ENCODE measurements at regions of chr1 and their contacts with region 1.

Region 1: GRCh38 chr1:147242439-147243227 is at the start of gene CHD1L:
- DNase-seq: peak; percentile 96
- ATAC-seq: peak; percentile 87
- H3K4me3 ChIP-seq: peak within 1 kb of the TSS; percentile 81 to 95 (median 89)
- H3K4me3 Mint-ChIP-seq: peak within 1 kb of the TSS; percentile 96
- H3K27ac ChIP-seq: peak within 1 kb of the TSS; percentile 46 to 77
- H3K27ac Mint-ChIP-seq: peak within 1 kb of the TSS; percentile 94
- H3K4me1 ChIP-seq: peaks cover 21 to 25% of the 10 kb centered on the region in 2 donors
- H3K4me1 Mint-ChIP-seq: peaks cover 40% of the 10 kb centered on the region
- H3K27me3 ChIP-seq: no peaks in the 10 kb centered on the region
- H3K27me3 Mint-ChIP-seq: no peaks in the 10 kb centered on the region
- CTCF ChIP-seq: peak; percentile 87
- total RNA-seq, gene CHD1L: 54.6 and 55.2 TPM in 2 replicates

Region 2: DNA sequence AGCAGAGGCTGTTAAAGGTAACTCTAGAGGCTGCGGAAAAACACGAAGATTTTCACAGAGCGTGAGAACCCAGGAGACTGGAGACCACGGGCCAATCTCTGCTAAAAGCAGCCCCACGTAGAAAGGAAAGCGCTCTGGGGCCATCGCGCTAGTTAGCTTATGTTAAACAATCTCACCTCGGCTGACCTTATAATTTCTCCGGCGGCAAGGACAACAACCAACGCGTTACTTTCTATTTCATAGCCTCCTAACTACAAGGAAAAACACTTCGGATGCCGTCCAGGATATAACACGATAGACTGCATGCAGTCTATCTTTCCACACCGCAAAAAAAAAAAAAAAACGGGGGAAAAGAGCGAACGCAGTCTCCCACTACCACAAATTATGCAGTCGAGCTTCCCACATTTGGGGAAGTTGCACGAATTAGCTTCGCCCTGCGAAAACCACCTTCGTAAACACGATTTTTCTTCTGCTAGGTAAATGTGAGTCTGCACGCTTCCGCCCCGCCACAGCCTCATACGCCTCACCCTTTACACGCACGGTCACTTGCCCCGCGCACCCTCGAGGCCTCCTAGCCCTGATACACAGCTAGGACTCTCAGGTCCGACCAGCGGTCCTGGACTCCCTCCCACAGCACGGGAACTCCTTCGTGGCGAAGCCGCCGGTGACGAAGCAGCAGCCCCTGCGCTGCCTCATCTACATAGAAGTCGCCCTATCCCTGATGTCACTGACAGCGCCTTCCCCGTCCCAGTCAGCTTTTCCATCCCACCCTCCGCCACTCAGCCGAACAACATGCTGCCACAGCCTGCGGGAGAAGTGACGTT is 158.1 kb before region 1 on chr1:
- CTCF ChIA-PET with region 1: interaction called, 4 read pairs
- POLR2A ChIA-PET with region 1: interaction called, 3 read pairs
- intact Hi-C with region 1: loop called (anchors 2 kb)
- DNase-seq: peak; percentile 92
- ATAC-seq: peak; percentile 76
- H3K4me3 ChIP-seq: peak overlapping the region; percentile 56 to 79 (median 71)
- H3K4me3 Mint-ChIP-seq: peak overlapping the region; percentile 99
- H3K27ac ChIP-seq: peak overlapping the region; percentile 93 to 96
- H3K27ac Mint-ChIP-seq: peak overlapping the region; percentile 100
- H3K4me1 ChIP-seq: peaks cover 33 to 36% of the 10 kb centered on the region in 2 donors
- H3K4me1 Mint-ChIP-seq: peaks cover 33% of the 10 kb centered on the region
- H3K27me3 ChIP-seq: peaks cover 0 to 29% (median 23%) of the 10 kb centered on the region in 4 experiments
- H3K27me3 Mint-ChIP-seq: peaks cover 51% of the 10 kb centered on the region
- CTCF ChIP-seq: no peak

Region 3: DNA sequence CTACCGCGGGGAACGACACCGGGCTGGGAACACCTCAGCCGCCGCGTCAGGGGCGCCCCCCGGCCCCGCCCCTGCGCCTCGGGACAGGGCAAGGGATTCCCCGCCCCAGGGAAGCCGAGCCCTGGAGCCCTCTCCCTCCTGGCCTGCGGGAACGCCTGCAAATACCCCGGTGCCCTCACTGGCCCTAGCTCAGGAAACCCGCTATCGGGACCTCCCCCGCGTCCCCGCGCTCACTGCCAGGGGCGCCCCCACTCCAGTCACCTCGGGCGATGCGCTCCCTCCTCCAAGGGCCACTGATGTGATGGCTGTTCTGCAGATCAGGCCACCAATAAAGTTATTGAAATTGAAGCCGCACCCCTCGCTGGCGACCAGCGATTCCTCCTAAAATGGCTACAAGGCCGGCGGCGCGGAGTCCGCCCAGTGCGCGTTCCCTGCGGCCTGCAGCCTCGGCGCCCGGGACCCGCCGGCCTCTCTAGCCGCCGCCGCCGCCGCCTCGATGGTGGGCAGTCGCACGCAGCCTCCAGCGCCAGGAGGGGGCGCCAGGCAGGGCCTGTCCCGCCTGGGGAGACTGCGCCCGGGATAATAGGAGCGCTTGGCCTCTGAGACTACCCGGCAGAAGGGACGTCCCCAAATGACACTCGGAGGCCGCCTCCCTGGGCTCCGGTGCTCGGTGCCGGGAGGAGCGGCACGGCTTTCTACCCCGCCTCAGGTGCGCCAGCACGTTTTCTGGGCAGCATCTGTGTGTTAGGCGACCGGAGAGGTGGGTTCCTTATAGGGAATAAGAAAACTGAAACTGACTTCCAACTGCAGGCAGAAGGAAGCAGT is 70.3 kb before region 1 on chr1 and contains the start of gene PRKAB2:
- CTCF ChIA-PET with region 1: interaction called, 63 read pairs
- POLR2A ChIA-PET with region 1: interaction called, 10 read pairs
- intact Hi-C with region 1: loop called (anchors 1 kb)
- DNase-seq: peak; percentile 97
- ATAC-seq: peak; percentile 88
- H3K4me3 ChIP-seq: peak within 1 kb of the TSS; percentile 86 to 93 (median 92)
- H3K4me3 Mint-ChIP-seq: peak within 1 kb of the TSS; percentile 95
- H3K27ac ChIP-seq: peak within 1 kb of the TSS; percentile 75 to 86
- H3K27ac Mint-ChIP-seq: peak within 1 kb of the TSS; percentile 94
- H3K4me1 ChIP-seq: peaks cover 21 to 22% of the 10 kb centered on the region in 2 donors
- H3K4me1 Mint-ChIP-seq: peaks cover 35% of the 10 kb centered on the region
- H3K27me3 ChIP-seq: no peaks in the 10 kb centered on the region
- H3K27me3 Mint-ChIP-seq: no peaks in the 10 kb centered on the region
- CTCF ChIP-seq: peak; percentile 88
- total RNA-seq, gene PRKAB2: 17.1 and 18.3 TPM in 2 replicates

Region 4: DNA sequence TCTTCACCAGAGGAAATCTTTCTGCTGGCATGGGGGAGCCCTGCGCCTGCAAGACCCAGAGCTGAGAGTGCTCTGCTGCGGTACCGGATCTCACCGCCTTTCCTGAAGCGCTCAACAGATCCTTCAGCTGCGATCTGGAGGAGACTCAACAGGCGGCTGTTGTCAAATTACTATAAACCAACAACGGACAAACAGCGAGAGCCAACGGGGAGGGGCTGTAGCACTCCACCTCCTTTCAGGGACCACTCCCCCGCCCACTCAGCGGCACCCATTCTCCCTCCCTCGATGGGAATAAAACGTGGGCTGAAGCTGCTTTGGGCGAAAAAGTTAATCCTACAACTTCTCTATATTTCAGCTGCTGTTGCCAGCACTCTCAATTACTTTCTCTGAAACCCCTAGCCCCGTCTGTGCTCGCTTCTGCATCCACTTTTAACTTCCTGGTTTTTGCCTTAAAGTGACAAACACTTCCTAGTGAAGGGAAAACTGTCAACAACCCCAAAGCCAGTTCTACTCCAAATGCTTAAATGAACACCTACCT is 17.4 kb before region 1 on chr1 and contains the start of gene FMO5:
- CTCF ChIA-PET with region 1: interaction called, 11 read pairs
- POLR2A ChIA-PET with region 1: interaction called, 11 read pairs
- intact Hi-C with region 1: loop called (anchors 2 kb)
- DNase-seq: peak; percentile 67
- ATAC-seq: peak; percentile 91
- H3K4me3 ChIP-seq: peak within 1 kb of the TSS; percentile 75 to 94 (median 80)
- H3K4me3 Mint-ChIP-seq: peak within 1 kb of the TSS; percentile 96
- H3K27ac ChIP-seq: peak within 1 kb of the TSS; percentile 74 to 77
- H3K27ac Mint-ChIP-seq: peak within 1 kb of the TSS; percentile 95
- H3K4me1 ChIP-seq: peaks cover 10 to 13% of the 10 kb centered on the region in 2 donors
- H3K4me1 Mint-ChIP-seq: peaks cover 22% of the 10 kb centered on the region
- H3K27me3 ChIP-seq: no peaks in the 10 kb centered on the region
- H3K27me3 Mint-ChIP-seq: no peaks in the 10 kb centered on the region
- CTCF ChIP-seq: no peak
- total RNA-seq, gene FMO5: 4.4 and 5.5 TPM in 2 replicates

Region 5: GRCh38 chr1:147273409-147274336 is 31.0 kb after region 1 on chr1:
- CTCF ChIA-PET with region 1: interaction called, 18 read pairs
- POLR2A ChIA-PET with region 1: no interaction called
- intact Hi-C with region 1: no loop called
- DNase-seq: peak; percentile 59
- ATAC-seq: no peak
- H3K4me3 ChIP-seq: no peak overlapping the region
- H3K4me3 Mint-ChIP-seq: no peak overlapping the region
- H3K27ac ChIP-seq: no peak overlapping the region
- H3K27ac Mint-ChIP-seq: no peak overlapping the region
- H3K4me1 ChIP-seq: no peaks in the 10 kb centered on the region
- H3K4me1 Mint-ChIP-seq: no peaks in the 10 kb centered on the region
- H3K27me3 ChIP-seq: no peaks in the 10 kb centered on the region
- H3K27me3 Mint-ChIP-seq: no peaks in the 10 kb centered on the region
- CTCF ChIP-seq: peak; percentile 78

Region 6: DNA sequence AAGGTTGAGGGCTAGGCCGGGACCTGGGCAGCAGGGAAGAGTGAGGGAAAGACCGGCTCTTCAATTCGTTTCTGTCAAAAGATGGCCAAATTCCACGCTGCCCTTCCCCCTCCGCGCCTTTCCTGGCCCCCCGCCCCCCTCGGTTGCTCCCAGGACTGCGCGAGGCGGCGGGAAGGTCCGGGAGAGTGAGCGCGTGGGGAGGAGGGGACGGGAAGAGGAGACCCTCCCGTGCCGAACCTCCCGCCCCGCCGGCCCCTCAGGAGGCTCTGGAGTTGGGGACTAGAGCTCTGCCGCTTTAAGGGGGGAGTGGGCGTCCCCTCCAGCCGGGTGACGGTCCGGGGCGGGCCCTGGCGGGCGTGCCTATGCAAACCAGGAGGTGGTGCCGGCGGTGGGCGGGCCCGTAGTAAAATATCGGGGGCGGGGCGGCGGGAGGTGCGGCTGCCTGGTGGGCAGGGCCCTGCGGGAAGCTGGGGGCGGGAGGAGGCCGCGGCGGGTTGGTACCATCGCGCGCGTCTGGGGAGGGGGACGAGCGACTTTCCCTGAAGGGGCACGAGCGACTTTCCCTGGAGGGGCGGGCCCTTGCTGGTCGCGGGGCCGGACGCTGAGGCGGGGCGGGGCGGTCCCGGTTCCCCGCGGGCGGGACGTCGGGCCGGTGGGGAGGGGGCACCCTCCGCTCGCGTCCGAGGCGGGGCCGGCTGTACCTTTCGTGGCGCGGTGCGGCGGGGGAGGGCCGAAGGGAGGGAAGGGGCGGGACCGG is 356.9 kb after region 1 on chr1:
- CTCF ChIA-PET with region 1: no interaction called
- POLR2A ChIA-PET with region 1: no interaction called
- intact Hi-C with region 1: loop called (anchors 5 kb)
- DNase-seq: peak; percentile 96
- ATAC-seq: peak; percentile 84
- H3K4me3 ChIP-seq: peak overlapping the region; percentile 47 to 83 (median 74)
- H3K4me3 Mint-ChIP-seq: peak overlapping the region; percentile 94
- H3K27ac ChIP-seq: peak overlapping the region; percentile 28 to 62
- H3K27ac Mint-ChIP-seq: peak overlapping the region; percentile 71
- H3K4me1 ChIP-seq: peaks cover 15 to 18% of the 10 kb centered on the region in 2 donors
- H3K4me1 Mint-ChIP-seq: peaks cover 15% of the 10 kb centered on the region
- H3K27me3 ChIP-seq: peaks cover 0 to 13% (median 8%) of the 10 kb centered on the region in 4 experiments
- H3K27me3 Mint-ChIP-seq: no peaks in the 10 kb centered on the region
- CTCF ChIP-seq: no peak